ENCODE measurements at regions of chr11 and their contacts with region 1.

Region 1: GRCh38 chr11:3841426-3842350 is 929 bp upstream of the RHOG start:
- DNase-seq: peak; percentile 90
- ATAC-seq: peak; percentile 79
- H3K4me3 Mint-ChIP-seq: peak overlapping the region; percentile 90
- H3K27ac Mint-ChIP-seq: peak overlapping the region; percentile 98
- H3K4me1 Mint-ChIP-seq: peaks cover 40% of the 10 kb centered on the region
- H3K27me3 Mint-ChIP-seq: no peaks in the 10 kb centered on the region

Region 2: GRCh38 chr11:3797329-3798095 is 44.2 kb before region 1 on chr11 and contains the start of gene NUP98:
- POLR2A ChIA-PET with region 1: interaction called, 10 read pairs
- DNase-seq: peak; percentile 99
- ATAC-seq: peak; percentile 97
- H3K4me3 Mint-ChIP-seq: peak within 1 kb of the TSS; percentile 93
- H3K27ac Mint-ChIP-seq: peak within 1 kb of the TSS; percentile 94
- H3K4me1 Mint-ChIP-seq: peaks cover 35% of the 10 kb centered on the region
- H3K27me3 Mint-ChIP-seq: no peaks in the 10 kb centered on the region
- total RNA-seq, gene NUP98: 91.4 to 96.7 TPM

Region 3: GRCh38 chr11:3824714-3825472 is 16.8 kb before region 1 on chr11:
- POLR2A ChIA-PET with region 1: interaction called, 26 read pairs
- DNase-seq: peak; percentile 82
- ATAC-seq: peak; percentile 90
- H3K4me3 Mint-ChIP-seq: no peak overlapping the region
- H3K27ac Mint-ChIP-seq: peak overlapping the region; percentile 60
- H3K4me1 Mint-ChIP-seq: peaks cover 37% of the 10 kb centered on the region
- H3K27me3 Mint-ChIP-seq: no peaks in the 10 kb centered on the region

Region 4: GRCh38 chr11:3947061-3947460 is 105.4 kb after region 1 on chr11:
- POLR2A ChIA-PET with region 1: interaction called, 17 read pairs
- DNase-seq: no peak
- ATAC-seq: peak; percentile 74
- H3K4me3 Mint-ChIP-seq: peak overlapping the region; percentile 75
- H3K27ac Mint-ChIP-seq: peak overlapping the region; percentile 98
- H3K4me1 Mint-ChIP-seq: peaks cover 86% of the 10 kb centered on the region
- H3K27me3 Mint-ChIP-seq: no peaks in the 10 kb centered on the region

Region 5: DNA sequence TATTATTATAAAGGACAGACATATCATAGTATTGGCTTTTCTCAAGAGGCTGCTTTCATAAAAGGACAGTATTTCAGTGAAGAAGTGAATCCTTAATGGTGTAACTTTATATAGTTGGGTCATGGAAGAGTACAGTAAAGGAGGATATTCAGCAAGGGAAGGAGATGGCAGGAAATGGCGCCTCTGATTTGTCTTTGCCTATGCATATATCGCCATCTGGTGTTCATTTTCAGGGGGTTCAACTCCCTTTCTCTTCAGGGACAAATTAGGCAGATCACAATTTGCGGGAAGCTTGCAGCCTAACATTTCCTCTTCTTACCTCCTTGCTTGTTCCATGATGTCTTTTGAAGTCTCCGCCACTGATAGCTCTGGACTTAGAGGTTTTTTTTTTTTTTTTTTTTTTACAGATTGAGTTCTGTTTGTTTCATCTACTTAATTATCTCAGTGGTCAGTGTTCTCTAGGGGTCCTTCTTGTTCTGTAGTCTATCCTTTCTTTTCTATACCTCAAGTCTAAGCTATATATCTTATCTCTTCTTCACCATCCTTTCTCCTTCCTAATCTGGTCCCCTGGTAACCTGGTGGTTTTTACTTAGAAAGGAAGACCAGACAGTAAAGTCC is 231.1 kb after region 1 on chr11:
- POLR2A ChIA-PET with region 1: interaction called, 13 read pairs
- DNase-seq: no peak
- ATAC-seq: peak; percentile 66
- H3K4me3 Mint-ChIP-seq: no peak overlapping the region
- H3K27ac Mint-ChIP-seq: no peak overlapping the region
- H3K4me1 Mint-ChIP-seq: peaks cover 31% of the 10 kb centered on the region
- H3K27me3 Mint-ChIP-seq: no peaks in the 10 kb centered on the region

Region 6: DNA sequence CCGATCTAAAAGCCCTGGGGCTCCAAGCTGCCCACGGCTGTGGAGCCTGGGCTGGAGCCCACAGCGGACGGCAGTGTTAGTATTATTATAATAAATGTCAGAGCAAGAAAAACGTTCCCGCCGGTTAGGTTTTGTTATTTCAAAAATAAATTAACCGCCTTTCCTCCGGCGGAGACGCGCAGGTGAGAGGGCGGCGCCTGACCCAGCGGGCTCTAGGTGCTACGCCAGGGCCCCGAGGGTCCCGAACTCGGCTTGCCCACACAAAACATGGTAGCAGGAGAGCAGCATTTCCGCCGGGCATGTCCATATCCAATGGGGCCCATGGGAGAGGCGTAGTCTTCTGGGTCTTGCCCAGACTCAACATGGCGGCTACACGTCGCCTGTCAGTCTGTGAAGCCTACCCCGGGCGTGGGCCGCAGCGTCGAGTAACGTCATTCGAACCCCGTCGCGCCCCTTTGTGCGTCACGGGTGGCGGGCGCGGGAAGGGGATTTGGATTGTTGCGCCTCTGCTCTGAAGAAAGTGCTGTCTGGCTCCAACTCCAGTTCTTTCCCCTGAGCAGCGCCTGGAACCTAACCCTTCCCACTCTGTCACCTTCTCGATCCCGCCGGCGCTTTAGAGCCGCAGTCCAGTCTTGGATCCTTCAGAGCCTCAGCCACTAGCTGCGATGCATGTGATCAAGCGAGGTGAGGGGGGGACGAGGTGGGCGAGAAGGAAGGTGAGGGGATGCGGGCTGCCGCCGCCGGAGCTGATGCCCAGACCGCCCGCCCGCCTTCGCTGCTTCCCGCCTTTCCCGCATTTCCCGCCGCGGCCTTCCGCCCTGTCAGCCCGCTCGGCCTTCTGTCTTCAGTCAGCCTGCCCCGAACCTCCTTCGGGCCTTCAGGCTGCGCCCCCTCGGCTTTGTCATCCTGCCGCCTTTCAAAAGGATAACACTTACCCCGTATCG is 252.9 kb after region 1 on chr11 and contains the start of gene RRM1:
- POLR2A ChIA-PET with region 1: interaction called, 10 read pairs
- DNase-seq: peak; percentile 94
- ATAC-seq: peak; percentile 93
- H3K4me3 Mint-ChIP-seq: peak within 1 kb of the TSS; percentile 98
- H3K27ac Mint-ChIP-seq: peak within 1 kb of the TSS; percentile 99
- H3K4me1 Mint-ChIP-seq: peaks cover 72% of the 10 kb centered on the region
- H3K27me3 Mint-ChIP-seq: no peaks in the 10 kb centered on the region
- total RNA-seq, gene RRM1: 126 to 130 TPM

Measured in activated naive CD8-positive, alpha-beta T cell treated with anti-CD3 and anti-CD28 coated beads, Interleukin-2, amount 10 ng/mL, durations not matched to agents 7 days and 5 days (primary cell).